Left lung (tissue), 14 donors: ENCODE measurements at regions of chr1 and their contacts with region 1.

Region 1: GRCh38 chr1:67149179-67149770 is 14.5 kb upstream of the C1orf141 start:
- DNase-seq: peak in 3 of 4 donors; percentile 47 to 77 (median 47)
- ATAC-seq: peak; percentile 99
- H3K4me3 ChIP-seq: no peak overlapping the region
- H3K27ac ChIP-seq: no peak overlapping the region
- H3K4me1 ChIP-seq: peaks cover 0 to 9% of the 10 kb centered on the region in 2 donors
- H3K27me3 ChIP-seq: no peaks in the 10 kb centered on the region
- CTCF ChIP-seq: peak; percentile 45 to 58

Region 2: GRCh38 chr1:67005068-67005467 is 144.2 kb before region 1 on chr1:
- intact Hi-C with region 1: loop called in 1 of 2 experiments (anchors 10 kb)
- DNase-seq: no peak
- ATAC-seq: no peak
- H3K4me3 ChIP-seq: no peak overlapping the region
- H3K27ac ChIP-seq: no peak overlapping the region
- H3K4me1 ChIP-seq: no peaks in the 10 kb centered on the region
- H3K27me3 ChIP-seq: no peaks in the 10 kb centered on the region
- CTCF ChIP-seq: no peak

Region 3: DNA sequence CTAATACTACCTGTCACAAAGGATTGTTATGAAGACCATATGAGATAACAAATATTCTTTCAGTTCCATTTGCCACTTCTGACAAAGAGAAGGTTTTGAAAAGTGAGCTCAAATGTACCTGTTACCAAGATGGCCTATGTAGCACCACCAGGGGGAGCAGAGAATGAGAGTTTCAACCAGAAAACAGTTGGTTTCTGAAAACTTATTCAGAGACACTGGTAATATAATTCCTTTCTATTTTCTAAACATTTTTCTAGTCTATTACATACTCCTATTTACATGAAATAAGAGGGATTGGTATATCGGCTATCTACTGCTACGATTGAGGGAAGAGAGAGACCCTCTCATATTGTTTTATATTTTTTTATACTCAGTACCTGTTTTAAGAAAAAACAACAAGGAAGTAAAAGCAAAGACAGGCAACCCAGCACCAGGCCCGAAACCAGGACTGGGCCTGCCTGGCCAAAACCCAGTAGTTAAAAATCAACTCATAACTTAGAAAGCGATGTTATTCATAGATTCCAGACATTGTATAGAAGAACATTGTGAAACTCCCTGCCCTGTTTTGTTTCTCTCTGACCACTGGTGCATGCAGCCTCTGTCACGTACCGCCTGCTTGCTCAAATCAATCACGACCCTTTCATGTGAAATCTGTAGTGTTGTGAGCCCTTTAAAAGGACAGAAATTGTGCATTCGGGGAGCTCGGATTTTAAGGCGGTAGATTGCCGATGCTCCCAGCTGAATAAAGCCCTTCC is 65.3 kb after region 1 on chr1:
- intact Hi-C with region 1: no loop called
- DNase-seq: peak in 1 of 4 donors; percentile 8
- ATAC-seq: peak; percentile 32
- H3K4me3 ChIP-seq: no peak overlapping the region
- H3K27ac ChIP-seq: no peak overlapping the region
- H3K4me1 ChIP-seq: no peaks in the 10 kb centered on the region
- H3K27me3 ChIP-seq: no peaks in the 10 kb centered on the region
- CTCF ChIP-seq: peak; percentile 19 to 43

Region 4: DNA sequence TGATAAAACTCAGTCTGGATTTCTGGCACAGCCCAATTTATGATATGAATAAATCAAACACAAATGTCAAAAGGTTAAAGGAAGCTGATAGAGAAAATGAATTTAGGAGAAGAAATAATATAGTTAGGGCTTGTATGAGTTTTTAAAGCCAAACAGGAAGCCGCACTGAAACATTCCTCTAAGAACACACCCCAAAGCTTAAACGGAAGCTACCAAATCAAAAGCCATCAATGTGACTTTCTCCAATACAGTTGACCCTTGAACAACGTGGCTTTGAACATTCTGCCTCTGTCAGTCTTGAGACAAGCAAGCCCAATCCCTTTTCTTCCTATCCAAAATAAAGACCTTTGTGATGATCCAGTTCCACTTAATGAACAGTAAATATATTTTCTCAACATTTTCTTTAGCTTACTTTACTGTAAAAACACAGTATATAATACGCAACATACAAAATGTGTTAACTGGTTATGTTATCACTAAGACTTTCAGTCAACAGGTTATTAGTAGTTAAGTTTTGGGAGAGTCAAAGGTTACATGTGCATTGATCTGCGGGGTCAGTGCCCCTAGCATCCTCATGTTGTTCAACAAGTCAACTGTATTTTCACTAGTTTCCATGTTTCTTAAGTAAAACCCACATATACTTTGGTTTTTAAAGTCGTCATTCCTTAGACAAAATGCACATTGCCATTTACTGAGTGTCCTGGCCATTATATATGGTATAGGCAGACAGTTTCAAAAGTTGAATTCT is 269.7 kb after region 1 on chr1:
- intact Hi-C with region 1: no loop called
- DNase-seq: no peak
- ATAC-seq: no peak
- H3K4me3 ChIP-seq: no peak overlapping the region
- H3K27ac ChIP-seq: no peak overlapping the region
- H3K4me1 ChIP-seq: peaks cover 6% of the 10 kb centered on the region in 2 donors
- H3K27me3 ChIP-seq: no peaks in the 10 kb centered on the region
- CTCF ChIP-seq: no peak